ENCODE measurements at regions of chr19 and their contacts with region 1.

Region 1: GRCh38 chr19:50804420-50805272 is 14.4 kb downstream of the ACP4 start:
- DNase-seq: peak; percentile 99
- H3K4me3 Mint-ChIP-seq: peak overlapping the region; percentile 89
- H3K27ac Mint-ChIP-seq: peak overlapping the region; percentile 97
- H3K4me1 Mint-ChIP-seq: peaks cover 40% of the 10 kb centered on the region
- H3K27me3 Mint-ChIP-seq: no peaks in the 10 kb centered on the region

Region 2: DNA sequence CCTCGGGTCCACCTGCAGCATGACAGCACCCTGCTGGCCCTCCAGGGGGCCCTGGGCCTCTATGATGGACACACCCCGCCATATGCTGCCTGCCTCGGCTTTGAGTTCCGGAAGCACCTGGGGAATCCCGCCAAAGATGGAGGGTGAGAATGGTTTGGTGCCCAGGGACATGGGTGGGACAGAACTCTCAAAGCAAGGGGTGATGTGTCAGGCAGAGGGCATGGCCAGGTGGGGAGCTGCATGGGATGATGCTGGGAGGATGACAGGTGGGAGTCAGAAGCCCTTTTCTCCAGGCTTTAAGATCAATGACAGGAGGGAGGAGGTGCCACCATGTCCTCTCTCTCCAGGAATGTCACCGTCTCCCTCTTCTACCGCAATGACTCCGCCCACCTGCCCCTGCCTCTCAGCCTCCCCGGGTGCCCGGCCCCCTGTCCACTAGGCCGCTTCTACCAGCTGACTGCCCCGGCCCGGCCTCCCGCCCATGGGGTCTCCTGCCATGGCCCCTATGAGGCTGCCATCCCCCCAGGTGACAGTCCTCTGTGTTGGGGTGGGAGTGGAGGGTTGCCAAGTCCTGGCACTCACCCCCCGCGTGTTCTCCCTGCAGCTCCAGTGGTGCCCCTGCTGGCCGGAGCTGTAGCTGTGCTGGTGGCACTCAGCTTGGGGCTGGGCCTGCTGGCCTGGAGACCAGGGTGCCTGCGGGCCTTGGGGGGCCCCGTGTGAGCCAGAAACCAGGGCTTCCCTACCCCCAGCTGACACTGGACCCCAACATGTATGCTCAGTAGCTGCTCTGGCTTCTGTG is 10.0 kb before region 1 on chr19:
- CTCF ChIA-PET with region 1: no interaction called
- POLR2A ChIA-PET with region 1: interaction called, 72 read pairs
- DNase-seq: peak; percentile 29
- H3K4me3 Mint-ChIP-seq: no peak overlapping the region
- H3K27ac Mint-ChIP-seq: peak overlapping the region; percentile 31
- H3K4me1 Mint-ChIP-seq: peaks cover 5% of the 10 kb centered on the region
- H3K27me3 Mint-ChIP-seq: no peaks in the 10 kb centered on the region

Region 3: GRCh38 chr19:50835785-50836542 is 31.3 kb after region 1 on chr19:
- CTCF ChIA-PET with region 1: no interaction called
- POLR2A ChIA-PET with region 1: interaction called, 10 read pairs
- DNase-seq: peak; percentile 81
- H3K4me3 Mint-ChIP-seq: peak overlapping the region; percentile 74
- H3K27ac Mint-ChIP-seq: no peak overlapping the region
- H3K4me1 Mint-ChIP-seq: peaks cover 11% of the 10 kb centered on the region
- H3K27me3 Mint-ChIP-seq: peaks cover 26% of the 10 kb centered on the region